ENCODE measurements at regions of chr3 and their contacts with region 1.

Region 1: DNA sequence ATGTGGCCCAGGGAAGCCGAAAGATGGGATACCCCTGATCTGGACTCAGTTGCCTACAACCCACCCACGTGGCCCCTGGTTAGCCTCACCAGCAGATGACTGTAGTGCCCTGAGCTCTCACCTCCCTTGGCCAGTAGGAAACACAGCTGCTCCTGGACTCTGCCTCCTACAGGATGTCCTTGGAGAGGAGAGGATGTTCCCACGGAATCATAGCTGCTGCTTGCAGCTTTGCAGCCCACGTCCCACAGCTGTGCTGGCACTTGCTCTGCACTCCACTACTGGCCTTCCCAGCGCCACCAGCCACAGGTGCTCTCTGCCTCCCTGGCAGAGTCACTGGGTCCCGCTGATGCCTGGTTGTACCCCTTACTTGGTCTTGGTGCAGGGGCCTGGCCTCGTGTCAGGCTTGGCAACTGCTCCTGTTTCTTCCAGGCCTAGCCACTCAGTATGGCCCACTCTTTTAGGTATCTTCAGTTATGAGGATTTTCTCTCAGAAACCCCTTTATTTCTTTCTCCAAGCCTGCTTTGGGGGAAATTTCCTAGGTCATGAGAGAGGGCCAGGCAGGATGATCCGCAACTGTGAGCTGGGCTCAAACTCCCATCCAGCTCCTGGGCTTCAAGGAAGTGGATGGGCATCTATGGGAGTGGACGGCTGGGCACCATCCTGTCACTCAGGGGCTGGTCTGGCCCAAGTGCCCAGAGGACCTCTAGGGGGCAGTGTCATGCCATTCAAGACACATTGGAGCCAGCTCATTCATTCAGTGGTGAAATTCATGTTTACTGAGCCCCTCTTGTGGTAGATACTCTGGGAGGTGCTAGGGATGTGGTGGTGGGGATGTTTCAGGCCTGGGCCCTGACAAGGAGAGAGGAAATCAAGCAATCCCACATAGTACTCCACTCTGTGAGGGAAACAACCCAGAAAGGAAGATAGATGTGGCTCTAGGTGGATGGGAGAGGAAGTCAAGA is 16.2 kb upstream of the VILL start:
- DNase-seq: peak; percentile 77
- H3K4me3 Mint-ChIP-seq: no peak overlapping the region
- H3K27ac Mint-ChIP-seq: no peak overlapping the region
- H3K4me1 Mint-ChIP-seq: peaks cover 3% of the 10 kb centered on the region
- H3K27me3 Mint-ChIP-seq: no peaks in the 10 kb centered on the region

Region 2: GRCh38 chr3:37986479-37987314 is 12.3 kb after region 1 on chr3:
- CTCF ChIA-PET with region 1: interaction called, 23 read pairs
- POLR2A ChIA-PET with region 1: no interaction called
- intact Hi-C with region 1: no loop called
- DNase-seq: no peak
- H3K4me3 Mint-ChIP-seq: no peak overlapping the region
- H3K27ac Mint-ChIP-seq: no peak overlapping the region
- H3K4me1 Mint-ChIP-seq: no peaks in the 10 kb centered on the region
- H3K27me3 Mint-ChIP-seq: no peaks in the 10 kb centered on the region

Region 3: DNA sequence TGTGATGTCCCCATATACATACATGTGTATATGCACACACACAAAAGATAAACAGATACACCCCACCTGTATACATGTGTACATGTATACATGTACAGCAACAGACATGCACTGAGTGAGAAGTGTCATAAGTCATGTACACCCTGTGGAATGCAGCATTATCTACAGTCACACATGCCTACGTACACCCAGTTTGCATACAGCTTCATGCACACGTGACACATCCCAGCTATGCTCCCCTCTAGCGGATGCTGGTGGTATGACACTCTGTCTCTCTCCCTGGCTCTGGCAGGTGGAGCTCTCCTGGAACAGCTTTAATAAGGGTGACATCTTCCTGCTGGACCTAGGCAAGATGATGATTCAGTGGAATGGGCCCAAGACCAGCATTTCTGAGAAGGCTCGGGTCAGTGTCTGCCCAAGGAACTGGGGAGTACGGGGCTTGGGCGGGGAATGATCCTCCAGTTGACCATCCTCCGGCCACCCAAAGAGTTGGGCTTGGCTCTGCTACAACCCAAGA is 22.4 kb after region 1 on chr3:
- CTCF ChIA-PET with region 1: interaction called, 48 read pairs
- POLR2A ChIA-PET with region 1: no interaction called
- intact Hi-C with region 1: loop called (anchors 1 kb)
- DNase-seq: peak; percentile 91
- H3K4me3 Mint-ChIP-seq: no peak overlapping the region
- H3K27ac Mint-ChIP-seq: peak overlapping the region; percentile 94
- H3K4me1 Mint-ChIP-seq: peaks cover 59% of the 10 kb centered on the region
- H3K27me3 Mint-ChIP-seq: no peaks in the 10 kb centered on the region

Region 4: GRCh38 chr3:38004415-38005076 is 30.1 kb after region 1 on chr3:
- CTCF ChIA-PET with region 1: interaction called, 16 read pairs
- POLR2A ChIA-PET with region 1: no interaction called
- intact Hi-C with region 1: loop called (anchors 1 kb)
- DNase-seq: peak; percentile 72
- H3K4me3 Mint-ChIP-seq: no peak overlapping the region
- H3K27ac Mint-ChIP-seq: peak overlapping the region; percentile 54
- H3K4me1 Mint-ChIP-seq: peaks cover 17% of the 10 kb centered on the region
- H3K27me3 Mint-ChIP-seq: no peaks in the 10 kb centered on the region

Region 5: DNA sequence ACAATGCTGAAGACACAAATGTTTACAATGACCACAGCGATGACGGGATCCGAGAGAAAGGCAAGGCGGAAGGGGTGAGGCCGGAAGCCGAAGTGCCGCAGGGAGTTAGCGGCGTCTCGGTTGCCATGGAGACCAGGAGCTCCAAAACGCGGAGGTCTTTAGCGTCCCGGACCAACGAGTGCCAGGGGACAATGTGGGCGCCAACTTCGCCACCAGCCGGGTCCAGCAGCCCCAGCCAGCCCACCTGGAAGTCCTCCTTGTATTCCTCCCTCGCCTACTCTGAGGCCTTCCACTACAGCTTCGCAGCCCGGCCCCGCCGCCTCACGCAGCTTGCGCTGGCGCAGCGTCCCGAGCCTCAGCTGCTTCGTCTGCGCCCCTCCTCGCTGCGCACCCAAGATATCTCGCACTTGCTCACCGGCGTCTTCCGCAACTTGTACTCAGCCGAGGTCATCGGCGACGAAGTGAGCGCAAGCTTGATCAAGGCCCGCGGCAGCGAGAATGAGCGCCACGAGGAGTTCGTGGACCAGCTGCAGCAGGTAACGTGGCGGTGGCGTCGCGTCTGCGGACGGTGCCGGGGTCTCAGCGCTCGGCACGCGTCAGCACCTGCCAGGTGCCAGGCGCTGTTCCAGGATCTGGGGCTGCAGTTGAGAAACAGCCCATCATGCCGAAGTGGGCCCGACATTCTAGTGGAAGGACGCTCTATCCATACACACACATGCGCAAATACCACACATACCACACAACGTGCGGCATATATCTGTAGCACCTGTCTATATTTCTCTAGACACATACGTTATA is 64.9 kb after region 1 on chr3 and contains the start of gene DLEC1:
- CTCF ChIA-PET with region 1: interaction called, 8 read pairs
- POLR2A ChIA-PET with region 1: no interaction called
- intact Hi-C with region 1: loop called (anchors 1 kb)
- DNase-seq: peak; percentile 92
- H3K4me3 Mint-ChIP-seq: peak within 1 kb of the TSS; percentile 48
- H3K27ac Mint-ChIP-seq: peak within 1 kb of the TSS; percentile 93
- H3K4me1 Mint-ChIP-seq: peaks cover 33% of the 10 kb centered on the region
- H3K27me3 Mint-ChIP-seq: no peaks in the 10 kb centered on the region
- total RNA-seq, gene DLEC1: 0.70 to 1.1 TPM

Region 6: GRCh38 chr3:38117748-38118420 is 143.5 kb after region 1 on chr3:
- CTCF ChIA-PET with region 1: interaction called, 3 read pairs
- POLR2A ChIA-PET with region 1: no interaction called
- intact Hi-C with region 1: loop called (anchors 10 kb)
- DNase-seq: peak; percentile 85
- H3K4me3 Mint-ChIP-seq: no peak overlapping the region
- H3K27ac Mint-ChIP-seq: no peak overlapping the region
- H3K4me1 Mint-ChIP-seq: no peaks in the 10 kb centered on the region
- H3K27me3 Mint-ChIP-seq: no peaks in the 10 kb centered on the region

Measured in activated CD4-positive, alpha-beta memory T cell treated with anti-CD3 and anti-CD28 coated beads for 36 hours (primary cell).